ENCODE measurements at regions of chr9 and their contacts with region 1.

Region 1: GRCh38 chr9:2359821-2360505 is 261.6 kb upstream of the VLDLR start:
- DNase-seq: no peak
- H3K4me3 ChIP-seq: no peak overlapping the region
- H3K27ac ChIP-seq: no peak overlapping the region
- H3K4me1 ChIP-seq: no peaks in the 10 kb centered on the region
- H3K27me3 ChIP-seq: no peaks in the 10 kb centered on the region
- CTCF ChIP-seq: no peak
- POLR2A ChIP-seq: no peak

Region 2: DNA sequence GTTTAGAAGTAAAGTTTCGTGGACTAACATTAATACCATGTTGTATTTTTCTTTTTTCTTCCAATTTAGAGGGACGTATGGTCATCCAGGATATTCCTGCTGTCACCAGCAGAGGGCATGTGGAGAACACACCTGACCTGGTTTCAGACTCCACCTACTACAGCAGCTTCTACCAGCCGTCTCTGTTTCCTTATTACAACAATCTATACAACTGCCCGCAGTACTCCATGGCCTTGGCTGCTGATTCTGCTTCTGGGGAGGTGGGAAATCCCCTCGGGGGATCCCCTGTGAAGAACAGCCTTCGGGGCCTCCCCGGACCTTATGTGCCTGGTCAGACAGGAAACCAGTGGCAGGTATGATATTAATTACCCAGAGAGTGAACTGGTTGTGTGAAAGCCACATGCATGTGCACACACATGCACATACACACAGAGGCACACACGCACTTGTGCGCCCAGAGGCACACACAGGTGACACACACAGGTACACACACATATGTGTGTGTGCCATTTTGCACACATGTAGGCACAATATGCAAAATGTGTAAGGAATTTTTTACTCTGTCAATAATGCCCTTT is 1466.0 kb before region 1 on chr9:
- intact Hi-C with region 1: loop called (anchors 5 kb)
- DNase-seq: peak in 1 of 2 donors; percentile 37
- H3K4me3 ChIP-seq: peak overlapping the region in 1 of 3 donors; percentile 26
- H3K27ac ChIP-seq: no peak overlapping the region
- H3K4me1 ChIP-seq: no peaks in the 10 kb centered on the region
- H3K27me3 ChIP-seq: no peaks in the 10 kb centered on the region
- CTCF ChIP-seq: peak; percentile 78 to 86 (median 86)
- POLR2A ChIP-seq: no peak

Region 3: GRCh38 chr9:1637401-1637800 is 722.6 kb before region 1 on chr9:
- intact Hi-C with region 1: no loop called
- DNase-seq: no peak
- H3K4me3 ChIP-seq: no peak overlapping the region
- H3K27ac ChIP-seq: no peak overlapping the region
- H3K4me1 ChIP-seq: no peaks in the 10 kb centered on the region
- H3K27me3 ChIP-seq: no peaks in the 10 kb centered on the region
- CTCF ChIP-seq: no peak
- POLR2A ChIP-seq: no peak